Left cardiac atrium (tissue), 4 donors: ENCODE measurements at regions of chr19 and their contacts with region 1.

Region 1: GRCh38 chr19:4524808-4525562 is 6.7 kb upstream of the PLIN4 start:
- DNase-seq: peak; percentile 64
- ATAC-seq: peak in 1 of 2 donors; percentile 67

Region 2: GRCh38 chr19:4267101-4267900 is 257.7 kb before region 1 on chr19:
- intact Hi-C with region 1: loop called (anchors 10 kb)
- DNase-seq: peak; percentile 43
- ATAC-seq: peak; percentile 58 to 65

Region 3: DNA sequence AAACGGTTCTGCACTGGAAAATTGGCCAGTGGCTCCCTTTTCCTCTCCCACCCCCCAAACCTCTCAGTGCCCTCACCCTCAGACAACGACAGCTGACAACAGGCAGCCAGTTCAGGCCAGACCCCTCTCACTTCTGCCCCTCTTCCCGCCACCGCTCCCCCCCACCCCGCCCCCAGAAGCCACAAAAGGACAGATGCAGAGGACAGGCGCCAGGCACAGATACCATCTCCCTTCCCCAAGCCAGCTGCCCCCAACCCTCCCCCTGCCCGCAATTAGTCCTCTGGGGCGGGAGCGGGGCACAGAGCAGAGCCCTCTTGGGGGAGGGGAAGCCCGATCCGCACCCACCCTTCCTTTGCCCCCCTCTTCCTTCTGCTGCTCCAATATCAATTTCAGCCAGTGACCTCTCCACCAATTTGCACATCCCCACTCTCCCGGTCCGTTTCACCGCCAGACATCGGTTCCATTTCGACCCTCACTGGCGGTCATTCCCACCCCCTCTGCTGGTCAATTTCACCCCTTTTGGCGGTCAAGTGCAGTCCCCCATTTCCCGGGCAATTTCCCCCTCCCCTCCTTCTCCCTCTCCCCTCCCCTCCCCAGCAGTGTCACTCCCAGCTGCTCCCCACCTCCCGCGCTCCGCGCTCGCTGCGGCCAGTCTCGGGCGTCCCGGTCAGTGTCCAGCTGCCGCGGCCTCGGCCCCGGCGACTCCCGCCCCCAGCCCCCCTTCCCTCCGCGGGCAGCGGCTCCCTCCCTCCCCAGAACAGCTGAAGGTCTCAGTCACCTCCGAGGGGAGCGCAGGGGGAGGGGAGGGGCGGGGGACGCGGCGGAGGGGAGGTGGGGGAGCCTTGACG is 246.3 kb before region 1 on chr19 and contains the start of gene SHD:
- intact Hi-C with region 1: loop called in 1 of 2 experiments (anchors 10 kb)
- DNase-seq: no peak
- ATAC-seq: peak; percentile 52 to 66
- total RNA-seq, gene SHD: 21.4 to 37.0 TPM